Activated B cell treated with CpG ODN at 0.5 μM for 24 hours (primary cell): ENCODE measurements at regions of chr15 and their contacts with region 1.

Region 1: DNA sequence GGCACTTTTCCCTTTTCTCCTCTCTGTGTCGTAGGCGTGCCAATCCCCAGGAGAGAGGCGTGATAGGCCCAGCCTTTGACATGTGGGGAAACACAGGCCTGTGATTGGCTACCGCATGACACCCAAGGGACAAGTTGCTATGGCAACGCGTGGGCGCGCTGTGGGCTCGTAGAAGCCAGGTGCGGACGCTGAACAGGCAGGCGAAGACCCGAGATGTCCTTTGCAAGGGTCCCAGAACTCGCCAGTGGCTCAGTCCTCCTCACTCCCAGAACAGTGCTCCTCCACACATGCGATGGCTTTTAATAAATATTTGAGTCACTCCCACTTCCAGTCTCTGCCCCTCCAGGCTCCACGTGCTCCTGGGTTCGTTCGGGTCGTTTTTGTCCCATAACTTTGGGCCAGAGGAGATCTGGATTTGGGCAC is 4.2 kb downstream of the SLC51B start:
- DNase-seq: peak; percentile 83
- ATAC-seq: peak; percentile 97
- H3K4me3 Mint-ChIP-seq: peak overlapping the region; percentile 77
- H3K27ac Mint-ChIP-seq: peak overlapping the region; percentile 63
- H3K4me1 Mint-ChIP-seq: peaks cover 19% of the 10 kb centered on the region
- H3K27me3 Mint-ChIP-seq: peaks cover 3% of the 10 kb centered on the region
- CTCF ChIP-seq: no peak

Region 2: GRCh38 chr15:64749999-64750657 is 299.3 kb before region 1 on chr15:
- CTCF ChIA-PET with region 1: no interaction called
- POLR2A ChIA-PET with region 1: interaction called, 10 read pairs
- intact Hi-C with region 1: no loop called
- DNase-seq: no peak
- ATAC-seq: no peak
- H3K4me3 Mint-ChIP-seq: no peak overlapping the region
- H3K27ac Mint-ChIP-seq: no peak overlapping the region
- H3K4me1 Mint-ChIP-seq: peaks cover 30% of the 10 kb centered on the region
- H3K27me3 Mint-ChIP-seq: no peaks in the 10 kb centered on the region
- CTCF ChIP-seq: no peak

Region 3: GRCh38 chr15:64893481-64894394 is 155.7 kb before region 1 on chr15:
- CTCF ChIA-PET with region 1: no interaction called
- POLR2A ChIA-PET with region 1: no interaction called
- intact Hi-C with region 1: no loop called
- DNase-seq: peak; percentile 90
- ATAC-seq: peak; percentile 72
- H3K4me3 Mint-ChIP-seq: peak overlapping the region; percentile 89
- H3K27ac Mint-ChIP-seq: peak overlapping the region; percentile 99
- H3K4me1 Mint-ChIP-seq: peaks cover 76% of the 10 kb centered on the region
- H3K27me3 Mint-ChIP-seq: no peaks in the 10 kb centered on the region
- CTCF ChIP-seq: no peak

Region 4: DNA sequence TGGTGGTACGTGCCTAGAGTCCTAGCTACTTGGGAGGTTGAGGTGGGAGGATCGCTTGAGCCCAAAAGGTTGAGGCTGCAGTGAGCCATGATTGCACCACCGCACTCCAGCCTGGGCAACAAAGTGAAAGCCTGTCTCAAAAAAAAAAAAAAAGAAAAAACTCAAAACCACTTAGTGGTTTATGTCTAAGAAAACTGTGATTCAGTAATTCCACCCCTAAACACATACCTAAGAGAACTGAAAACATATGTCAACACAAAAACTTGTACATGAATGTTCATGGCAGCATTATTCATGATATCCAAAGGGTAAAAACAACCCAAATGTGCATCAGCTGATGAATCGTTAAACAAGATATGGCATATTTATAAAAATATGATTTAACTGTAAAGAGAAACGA is 74.0 kb before region 1 on chr15:
- CTCF ChIA-PET with region 1: no interaction called
- POLR2A ChIA-PET with region 1: no interaction called
- intact Hi-C with region 1: no loop called
- DNase-seq: no peak
- ATAC-seq: no peak
- H3K4me3 Mint-ChIP-seq: no peak overlapping the region
- H3K27ac Mint-ChIP-seq: no peak overlapping the region
- H3K4me1 Mint-ChIP-seq: no peaks in the 10 kb centered on the region
- H3K27me3 Mint-ChIP-seq: no peaks in the 10 kb centered on the region
- CTCF ChIP-seq: no peak